ENCODE measurements at regions of chr11 and their contacts with region 1.

Region 1: GRCh38 chr11:47477323-47477722 is 28.4 kb upstream of the RAPSN start:
- DNase-seq: no peak
- CTCF ChIP-seq: no peak

Region 2: GRCh38 chr11:47488674-47489394 is 11.5 kb after region 1 on chr11:
- CTCF ChIA-PET with region 1: interaction called, 11 read pairs
- POLR2A ChIA-PET with region 1: no interaction called
- DNase-seq: no peak
- CTCF ChIP-seq: no peak

Region 3: DNA sequence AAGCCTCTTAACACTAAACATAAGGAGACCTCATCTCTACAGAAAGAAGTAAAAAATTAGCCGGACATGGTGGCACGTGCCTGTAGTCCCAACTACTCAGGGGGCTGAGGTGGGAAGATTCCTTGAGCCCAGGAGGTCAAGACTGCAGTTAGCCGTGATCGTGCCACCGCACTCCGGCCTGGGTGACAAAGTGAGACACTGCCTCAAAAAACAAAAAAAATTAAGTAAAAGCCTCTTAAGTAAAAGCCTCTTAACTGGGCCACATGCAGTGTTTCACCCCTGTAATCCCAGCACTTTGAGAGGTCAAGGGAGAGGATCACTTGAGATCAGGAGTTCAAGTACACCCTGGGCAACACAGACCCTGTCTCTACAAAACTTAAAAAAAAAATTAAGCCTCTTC is 49.9 kb after region 1 on chr11:
- CTCF ChIA-PET with region 1: no interaction called
- POLR2A ChIA-PET with region 1: no interaction called
- DNase-seq: no peak
- CTCF ChIP-seq: no peak

Measured in GM10248 (cell line).